ENCODE measurements at regions of chr5 and their contacts with region 1.

Region 1: GRCh38 chr5:146233441-146233840 is 30.0 kb downstream of the RBM27 start:
- DNase-seq: no peak
- ATAC-seq: no peak
- H3K4me3 ChIP-seq: no peak overlapping the region
- H3K4me3 Mint-ChIP-seq: no peak overlapping the region
- H3K27ac ChIP-seq: no peak overlapping the region
- H3K27ac Mint-ChIP-seq: no peak overlapping the region
- H3K4me1 ChIP-seq: no peaks in the 10 kb centered on the region
- H3K4me1 Mint-ChIP-seq: no peaks in the 10 kb centered on the region
- H3K27me3 ChIP-seq: no peaks in the 10 kb centered on the region
- H3K27me3 Mint-ChIP-seq: no peaks in the 10 kb centered on the region
- CTCF ChIP-seq: no peak

Region 2: GRCh38 chr5:146249801-146250200 is 16.4 kb after region 1 on chr5:
- CTCF ChIA-PET with region 1: no interaction called
- POLR2A ChIA-PET with region 1: no interaction called
- intact Hi-C with region 1: no loop called
- DNase-seq: no peak
- ATAC-seq: no peak
- H3K4me3 ChIP-seq: no peak overlapping the region
- H3K4me3 Mint-ChIP-seq: no peak overlapping the region
- H3K27ac ChIP-seq: no peak overlapping the region
- H3K27ac Mint-ChIP-seq: no peak overlapping the region
- H3K4me1 ChIP-seq: no peaks in the 10 kb centered on the region
- H3K4me1 Mint-ChIP-seq: peaks cover 9% of the 10 kb centered on the region
- H3K27me3 ChIP-seq: no peaks in the 10 kb centered on the region
- H3K27me3 Mint-ChIP-seq: no peaks in the 10 kb centered on the region
- CTCF ChIP-seq: no peak

Region 3: GRCh38 chr5:146273109-146273508 is 39.7 kb after region 1 on chr5:
- CTCF ChIA-PET with region 1: no interaction called
- POLR2A ChIA-PET with region 1: no interaction called
- intact Hi-C with region 1: loop called in 1 of 2 experiments (anchors 5 kb)
- DNase-seq: no peak
- ATAC-seq: no peak
- H3K4me3 ChIP-seq: no peak overlapping the region
- H3K4me3 Mint-ChIP-seq: no peak overlapping the region
- H3K27ac ChIP-seq: no peak overlapping the region
- H3K27ac Mint-ChIP-seq: no peak overlapping the region
- H3K4me1 ChIP-seq: no peaks in the 10 kb centered on the region
- H3K4me1 Mint-ChIP-seq: no peaks in the 10 kb centered on the region
- H3K27me3 ChIP-seq: no peaks in the 10 kb centered on the region
- H3K27me3 Mint-ChIP-seq: no peaks in the 10 kb centered on the region
- CTCF ChIP-seq: no peak

Region 4: GRCh38 chr5:146399481-146399880 is 166.0 kb after region 1 on chr5:
- CTCF ChIA-PET with region 1: no interaction called
- POLR2A ChIA-PET with region 1: no interaction called
- intact Hi-C with region 1: no loop called
- DNase-seq: no peak
- ATAC-seq: no peak
- H3K4me3 ChIP-seq: no peak overlapping the region
- H3K4me3 Mint-ChIP-seq: no peak overlapping the region
- H3K27ac ChIP-seq: no peak overlapping the region
- H3K27ac Mint-ChIP-seq: no peak overlapping the region
- H3K4me1 ChIP-seq: no peaks in the 10 kb centered on the region
- H3K4me1 Mint-ChIP-seq: no peaks in the 10 kb centered on the region
- H3K27me3 ChIP-seq: peaks cover 15 to 18% of the 10 kb centered on the region in 2 experiments
- H3K27me3 Mint-ChIP-seq: peaks cover 75% of the 10 kb centered on the region
- CTCF ChIP-seq: no peak